ENCODE measurements at regions of chr6 and their contacts with region 1.

Region 1: GRCh38 chr6:85354761-85355618 is 94.9 kb upstream of the NT5E start:
- DNase-seq: peak; percentile 61 to 84
- ATAC-seq: peak; percentile 98

Region 2: DNA sequence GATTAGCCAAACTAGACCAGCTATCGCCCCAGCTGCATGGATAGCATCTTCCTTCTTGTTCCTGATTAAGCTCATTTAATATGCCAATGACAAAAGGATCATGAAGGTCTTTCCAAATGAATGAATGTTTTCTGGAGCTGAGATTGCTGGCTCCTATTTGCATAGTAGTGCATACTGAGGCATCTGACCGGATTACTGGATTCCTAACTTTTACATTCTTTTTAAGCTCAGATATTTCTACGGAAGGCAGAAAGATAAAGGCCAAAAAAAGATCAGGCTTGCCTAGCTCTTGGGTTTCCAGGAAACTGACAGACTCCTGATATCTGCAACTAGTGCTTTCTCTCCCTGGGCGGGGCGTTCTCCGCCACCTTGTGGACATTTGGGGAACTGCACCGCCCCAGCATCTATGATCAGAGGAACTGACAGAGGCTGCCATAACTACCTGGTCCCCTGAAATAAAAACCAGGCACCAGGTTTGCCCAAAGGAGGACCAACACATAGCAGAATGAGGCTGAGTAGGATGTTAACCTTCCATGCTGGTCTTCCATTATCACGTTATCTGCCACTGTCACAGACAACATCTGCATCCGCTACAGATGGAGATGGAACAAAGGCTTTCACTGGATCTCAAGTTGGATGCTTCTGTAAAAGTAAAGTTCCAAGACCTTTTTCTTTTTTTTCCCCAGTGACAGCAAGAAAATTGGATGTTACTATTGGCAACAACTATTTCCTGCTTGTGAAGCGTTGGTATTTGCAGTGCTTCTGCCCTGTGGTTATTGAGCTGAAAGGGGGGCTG is 128.1 kb after region 1 on chr6:
- intact Hi-C with region 1: loop called (anchors 2 to 10 kb)
- DNase-seq: peak; percentile 34 to 84
- ATAC-seq: peak; percentile 94